ENCODE measurements at regions of chr1 and their contacts with region 1.

Region 1: DNA sequence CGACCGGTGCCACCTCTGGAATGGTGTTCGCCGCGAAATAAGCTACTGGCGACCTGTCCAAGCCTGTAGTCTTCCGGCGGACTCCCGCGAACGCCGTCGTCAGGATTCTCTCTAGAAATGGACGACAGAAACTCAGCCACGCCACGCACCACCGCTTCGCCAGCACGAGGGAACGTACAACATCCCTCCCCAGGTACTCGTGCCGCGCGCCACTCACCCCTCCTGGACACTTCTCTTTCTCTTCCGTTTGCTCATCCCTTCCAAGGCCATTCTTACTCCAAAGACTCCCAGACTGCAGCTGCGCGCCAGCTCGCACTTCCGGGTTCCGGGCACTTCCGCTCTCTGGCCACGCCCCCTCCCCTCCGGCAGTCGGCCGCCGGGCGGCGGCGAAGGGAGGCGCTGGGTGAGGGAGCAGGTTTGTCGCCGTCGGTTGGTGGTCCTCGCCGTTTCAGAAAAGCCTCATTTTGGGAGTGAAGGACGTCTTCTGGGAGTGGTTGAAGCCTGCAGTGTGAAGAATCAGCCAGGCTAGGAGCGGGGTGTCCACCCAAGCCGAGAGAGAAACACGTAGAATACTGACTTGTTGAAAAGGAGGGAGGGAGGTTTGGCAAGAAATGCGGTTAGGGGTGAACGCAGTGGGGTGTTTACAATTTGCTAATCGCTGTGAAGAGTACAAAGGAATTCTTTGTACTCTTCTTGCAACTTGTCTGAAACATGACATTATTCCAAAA is at the start of gene RBM34:
- DNase-seq: peak; percentile 93
- H3K4me3 ChIP-seq: peak within 1 kb of the TSS; percentile 70 to 80
- H3K27ac ChIP-seq: peak within 1 kb of the TSS; percentile 76 to 88
- H3K4me1 ChIP-seq: peaks cover 0 to 10% of the 10 kb centered on the region in 2 experiments; a peak in 1 of 4 replicates
- H3K27me3 ChIP-seq: no peaks in the 10 kb centered on the region
- CTCF ChIP-seq: peak; percentile 12; the same call in 1 of the 2 replicates
- EP300 ChIP-seq: no peak
- RAD21 ChIP-seq: no peak
- polyA plus RNA-seq, gene RBM34: 33.9 and 39.9 TPM in 2 replicates

Region 2: GRCh38 chr1:235011599-235012435 is 149.3 kb before region 1 on chr1:
- CTCF ChIA-PET with region 1: no interaction called
- POLR2A ChIA-PET with region 1: no interaction called
- DNase-seq: peak; percentile 39
- H3K4me3 ChIP-seq: no peak overlapping the region
- H3K27ac ChIP-seq: peak overlapping the region; percentile 58 to 95; a peak in 3 of 4 replicates
- H3K4me1 ChIP-seq: peaks cover 7 to 9% of the 10 kb centered on the region in 2 experiments; a peak in 3 of 4 replicates
- H3K27me3 ChIP-seq: no peaks in the 10 kb centered on the region
- CTCF ChIP-seq: no peak
- EP300 ChIP-seq: peak; percentile 44 to 97; a peak in 3 of 4 replicates
- RAD21 ChIP-seq: no peak

Region 3: DNA sequence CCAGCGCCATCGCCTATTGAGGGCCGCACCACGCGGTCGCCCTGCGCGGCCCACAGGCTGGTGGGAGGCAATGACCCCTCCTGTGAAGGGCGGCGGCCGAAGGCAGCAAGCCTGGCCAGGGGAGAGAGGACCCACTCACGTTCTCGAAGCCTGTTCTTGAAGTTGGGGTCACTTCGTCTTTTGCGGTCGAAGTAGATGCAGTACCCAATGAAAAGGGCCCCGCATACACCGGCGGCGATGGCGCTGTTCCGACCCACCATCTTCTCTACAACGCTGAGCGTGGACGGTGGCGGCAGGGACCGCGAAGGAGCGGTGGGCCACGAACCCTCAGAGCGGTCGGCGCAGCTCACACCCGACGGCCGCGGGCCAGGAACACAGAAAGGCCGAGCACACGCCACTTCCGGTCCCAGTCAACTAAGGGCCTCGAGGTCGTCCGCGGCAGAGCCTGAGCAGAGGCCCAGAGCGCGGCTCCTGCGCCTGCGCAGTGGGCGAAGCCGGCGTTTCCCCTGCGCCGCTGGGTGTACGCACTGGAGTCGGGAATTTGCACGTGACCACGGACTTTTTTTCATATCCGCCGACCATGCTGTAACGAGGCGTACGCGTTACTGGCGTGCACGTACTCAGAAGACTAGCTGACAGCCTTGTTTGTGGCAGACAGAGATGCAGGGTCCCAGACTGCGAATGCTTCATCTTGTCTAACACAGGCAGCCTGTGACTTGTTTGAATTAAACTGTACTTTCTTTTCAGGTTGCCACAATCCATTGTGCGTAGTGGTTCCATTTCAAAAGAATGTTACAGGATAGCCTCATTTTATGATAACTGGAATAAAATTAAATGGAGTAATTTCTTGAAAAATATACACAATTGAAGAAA is 32.4 kb before region 1 on chr1 and contains the start of gene TOMM20:
- CTCF ChIA-PET with region 1: interaction called, 4 read pairs
- POLR2A ChIA-PET with region 1: interaction called, 10 read pairs
- DNase-seq: peak; percentile 97
- H3K4me3 ChIP-seq: peak within 1 kb of the TSS; percentile 70 to 75
- H3K27ac ChIP-seq: peak within 1 kb of the TSS; percentile 81 to 90
- H3K4me1 ChIP-seq: peaks cover 5 to 9% of the 10 kb centered on the region in 2 experiments; a peak in 3 of 4 replicates
- H3K27me3 ChIP-seq: no peaks in the 10 kb centered on the region
- CTCF ChIP-seq: peak; percentile 16; the same call in 1 of the 2 replicates
- EP300 ChIP-seq: no peak; a peak in 2 of 4 replicates
- RAD21 ChIP-seq: no peak
- polyA plus RNA-seq, gene TOMM20: 71.3 and 86.2 TPM in 2 replicates

Region 4: DNA sequence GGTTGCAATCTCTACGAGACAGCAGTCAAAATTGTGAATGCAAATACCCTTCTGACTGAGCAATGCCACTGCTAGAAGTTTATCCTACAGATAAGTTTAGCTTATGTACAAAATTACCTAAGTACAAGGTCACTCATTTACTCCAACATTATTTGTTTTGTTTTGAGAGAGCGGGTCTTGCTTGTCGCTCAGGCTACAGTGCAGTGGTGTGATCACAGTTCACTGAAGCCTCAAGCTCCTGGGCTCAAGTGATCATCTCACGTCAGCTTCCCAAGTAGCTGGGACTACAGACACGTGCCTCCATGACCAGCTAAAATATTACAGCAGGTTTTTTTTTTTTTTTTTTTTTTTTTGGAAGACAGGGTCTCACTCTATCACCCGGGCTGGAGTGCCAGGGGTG is 15.5 kb before region 1 on chr1:
- CTCF ChIA-PET with region 1: interaction called, 13 read pairs
- POLR2A ChIA-PET with region 1: no interaction called
- DNase-seq: no peak
- H3K4me3 ChIP-seq: no peak overlapping the region
- H3K27ac ChIP-seq: no peak overlapping the region
- H3K4me1 ChIP-seq: no peaks in the 10 kb centered on the region
- H3K27me3 ChIP-seq: no peaks in the 10 kb centered on the region
- CTCF ChIP-seq: no peak
- EP300 ChIP-seq: no peak
- RAD21 ChIP-seq: no peak